ENCODE measurements at regions of chr4 and their contacts with region 1.

Region 1: GRCh38 chr4:87390891-87391575 is at the start of gene HSD17B11:
- DNase-seq: peak; percentile 80
- ATAC-seq: peak; percentile 97
- H3K4me3 Mint-ChIP-seq: peak within 1 kb of the TSS; percentile 82
- H3K27ac Mint-ChIP-seq: peak within 1 kb of the TSS; percentile 96
- H3K4me1 Mint-ChIP-seq: peaks cover 15% of the 10 kb centered on the region
- H3K27me3 Mint-ChIP-seq: no peaks in the 10 kb centered on the region
- CTCF ChIP-seq: no peak
- total RNA-seq, gene HSD17B11: 14.0 to 16.4 TPM (median 14.8 TPM) in 3 replicates

Region 2: GRCh38 chr4:87375719-87376291 is 15.2 kb before region 1 on chr4:
- CTCF ChIA-PET with region 1: interaction called, 10 read pairs
- POLR2A ChIA-PET with region 1: interaction called, 3 read pairs
- DNase-seq: no peak
- ATAC-seq: peak; percentile 72
- H3K4me3 Mint-ChIP-seq: no peak overlapping the region
- H3K27ac Mint-ChIP-seq: no peak overlapping the region
- H3K4me1 Mint-ChIP-seq: no peaks in the 10 kb centered on the region
- H3K27me3 Mint-ChIP-seq: no peaks in the 10 kb centered on the region
- CTCF ChIP-seq: peak; percentile 5; the same call in 1 of the 2 replicates

Region 3: DNA sequence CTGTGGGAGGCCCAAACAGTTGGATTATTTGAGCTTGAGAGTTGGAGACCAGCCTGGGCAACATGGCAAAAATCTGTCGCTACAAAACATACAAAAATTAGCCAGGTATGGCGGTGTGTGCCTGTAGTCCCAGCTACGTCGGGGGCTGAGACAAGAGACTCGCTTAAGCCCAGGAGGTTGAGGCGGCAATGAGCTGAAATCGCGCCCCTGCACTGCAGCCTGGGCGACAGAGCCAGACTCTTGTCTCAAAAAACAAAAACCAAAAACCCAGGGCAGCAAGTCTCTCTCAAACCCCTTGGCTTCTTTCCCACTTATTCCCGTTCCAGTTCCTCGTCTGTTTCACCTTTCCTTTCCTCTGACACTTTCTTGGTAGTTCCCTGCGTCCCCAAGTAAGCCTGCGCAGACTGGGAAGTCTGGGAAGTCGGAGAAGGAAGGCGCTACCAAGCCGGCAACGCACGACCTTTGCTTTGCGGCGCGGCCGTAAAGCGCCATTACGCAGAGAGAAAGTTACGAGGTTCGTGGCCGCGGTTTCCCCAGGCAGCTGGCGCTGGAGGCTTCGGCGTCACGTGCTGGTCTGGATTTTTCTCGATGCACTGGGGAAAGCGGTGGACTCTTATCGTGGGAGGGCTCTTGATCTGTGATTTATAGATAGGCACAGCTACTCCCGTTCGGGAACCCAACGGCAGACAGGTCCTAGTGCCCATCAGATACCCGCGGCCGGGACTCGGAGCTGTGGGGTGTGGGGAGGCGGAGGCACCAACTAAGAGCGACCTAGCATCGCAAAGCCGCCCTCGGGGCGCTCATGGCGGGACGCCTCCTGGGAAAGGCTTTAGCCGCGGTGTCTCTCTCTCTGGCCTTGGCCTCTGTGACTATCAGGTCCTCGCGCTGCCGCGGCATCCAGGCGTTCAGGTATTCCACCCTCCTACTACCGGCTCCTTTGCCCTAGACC is 31.3 kb after region 1 on chr4 and contains the start of gene NUDT9:
- CTCF ChIA-PET with region 1: interaction called, 18 read pairs
- POLR2A ChIA-PET with region 1: interaction called, 6 read pairs
- DNase-seq: peak; percentile 94
- ATAC-seq: peak; percentile 86
- H3K4me3 Mint-ChIP-seq: peak within 1 kb of the TSS; percentile 93
- H3K27ac Mint-ChIP-seq: peak within 1 kb of the TSS; percentile 98
- H3K4me1 Mint-ChIP-seq: peaks cover 36% of the 10 kb centered on the region
- H3K27me3 Mint-ChIP-seq: peaks cover 5% of the 10 kb centered on the region; the same call in 1 of the 2 replicates
- CTCF ChIP-seq: no peak
- total RNA-seq, gene NUDT9: 25.4 to 33.3 TPM (median 27.2 TPM) in 3 replicates